ENCODE measurements at regions of chr17 and their contacts with region 1.

Region 1: GRCh38 chr17:76557368-76558197 is 17.7 kb downstream of the PRCD start:
- DNase-seq: peak; percentile 73 to 98
- H3K4me3 ChIP-seq: peak overlapping the region; percentile 50 to 84
- H3K27ac ChIP-seq: peak overlapping the region; percentile 82
- H3K4me1 ChIP-seq: peaks cover 4 to 21% of the 10 kb centered on the region in 2 donors
- H3K27me3 ChIP-seq: no peaks in the 10 kb centered on the region
- CTCF ChIP-seq: peak; percentile 67 to 76 (median 68)

Region 2: GRCh38 chr17:76307299-76307965 is 250.2 kb before region 1 on chr17:
- intact Hi-C with region 1: no loop called
- DNase-seq: no peak
- H3K4me3 ChIP-seq: no peak overlapping the region
- H3K27ac ChIP-seq: no peak overlapping the region
- H3K4me1 ChIP-seq: no peaks in the 10 kb centered on the region
- H3K27me3 ChIP-seq: no peaks in the 10 kb centered on the region
- CTCF ChIP-seq: no peak

Region 3: GRCh38 chr17:76527430-76528111 is 30.0 kb before region 1 on chr17:
- intact Hi-C with region 1: no loop called
- DNase-seq: peak; percentile 66 to 86
- H3K4me3 ChIP-seq: peak overlapping the region in 1 of 2 donors; percentile 39
- H3K27ac ChIP-seq: peak overlapping the region; percentile 93 to 95
- H3K4me1 ChIP-seq: peaks cover 22 to 36% of the 10 kb centered on the region in 2 donors
- H3K27me3 ChIP-seq: no peaks in the 10 kb centered on the region
- CTCF ChIP-seq: peak in 2 of 3 experiments; percentile 27 to 32

Region 4: GRCh38 chr17:76540381-76541300 is 16.9 kb before region 1 on chr17:
- intact Hi-C with region 1: loop called (anchors 2 kb)
- DNase-seq: peak; percentile 86 to 95
- H3K4me3 ChIP-seq: peak overlapping the region; percentile 49 to 59
- H3K27ac ChIP-seq: no peak overlapping the region
- H3K4me1 ChIP-seq: peaks cover 14% of the 10 kb centered on the region in 2 donors
- H3K27me3 ChIP-seq: peaks cover 12% of the 10 kb centered on the region
- CTCF ChIP-seq: peak in 1 of 3 experiments; percentile 10

Region 5: DNA sequence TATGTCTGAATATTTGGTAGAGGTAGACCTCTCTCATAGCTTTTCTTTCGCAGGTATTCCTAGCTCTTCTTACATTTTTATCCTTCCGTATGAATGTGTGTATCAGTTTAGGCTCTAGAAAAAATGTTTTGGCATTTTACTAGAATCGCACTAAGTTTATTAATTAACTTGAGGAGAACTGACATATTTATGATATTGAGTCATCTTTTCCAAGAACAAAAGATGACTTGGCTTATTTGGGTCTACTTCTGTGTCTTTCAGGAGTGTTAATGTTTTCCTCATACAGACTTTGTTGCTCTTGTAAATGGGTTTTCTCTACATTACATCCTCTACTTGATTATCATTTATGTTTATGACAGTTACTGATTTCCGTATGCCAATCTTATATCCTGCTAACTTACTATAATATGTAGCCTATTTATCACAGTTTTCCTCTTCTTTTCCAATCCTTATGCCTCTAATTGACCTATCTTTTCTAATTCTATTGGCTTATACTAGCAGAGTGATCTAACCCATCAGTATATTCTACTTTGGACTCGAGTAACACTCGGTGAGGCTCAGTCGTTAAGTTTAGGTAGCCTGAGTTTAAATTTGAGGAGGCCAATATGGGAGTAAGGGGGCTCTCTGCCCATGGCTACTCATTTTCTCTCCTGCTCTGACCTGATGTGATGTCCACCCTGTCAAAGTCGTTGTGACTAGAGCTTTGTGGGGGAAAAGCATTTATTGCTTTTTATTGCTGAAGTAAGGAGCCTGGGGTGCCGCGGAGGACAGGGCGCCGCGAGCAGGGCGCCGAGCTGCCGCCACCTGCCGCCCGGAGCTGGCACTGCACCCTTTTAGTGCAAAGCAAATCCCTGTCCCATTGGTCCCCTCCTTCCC is 65.9 kb after region 1 on chr17:
- intact Hi-C with region 1: loop called (anchors 2 kb)
- DNase-seq: peak in 1 of 2 donors; percentile 81
- H3K4me3 ChIP-seq: no peak overlapping the region
- H3K27ac ChIP-seq: no peak overlapping the region
- H3K4me1 ChIP-seq: no peaks in the 10 kb centered on the region
- H3K27me3 ChIP-seq: no peaks in the 10 kb centered on the region
- CTCF ChIP-seq: peak; percentile 76 to 97 (median 92)

Region 6: GRCh38 chr17:76671123-76671911 is 113.7 kb after region 1 on chr17:
- intact Hi-C with region 1: loop called (anchors 1 kb)
- DNase-seq: peak; percentile 99 to 100
- H3K4me3 ChIP-seq: peak overlapping the region; percentile 66 to 67
- H3K27ac ChIP-seq: peak overlapping the region; percentile 77 to 79
- H3K4me1 ChIP-seq: peaks cover 0 to 8% of the 10 kb centered on the region in 2 donors
- H3K27me3 ChIP-seq: peaks cover 3% of the 10 kb centered on the region
- CTCF ChIP-seq: no peak

Region 7: DNA sequence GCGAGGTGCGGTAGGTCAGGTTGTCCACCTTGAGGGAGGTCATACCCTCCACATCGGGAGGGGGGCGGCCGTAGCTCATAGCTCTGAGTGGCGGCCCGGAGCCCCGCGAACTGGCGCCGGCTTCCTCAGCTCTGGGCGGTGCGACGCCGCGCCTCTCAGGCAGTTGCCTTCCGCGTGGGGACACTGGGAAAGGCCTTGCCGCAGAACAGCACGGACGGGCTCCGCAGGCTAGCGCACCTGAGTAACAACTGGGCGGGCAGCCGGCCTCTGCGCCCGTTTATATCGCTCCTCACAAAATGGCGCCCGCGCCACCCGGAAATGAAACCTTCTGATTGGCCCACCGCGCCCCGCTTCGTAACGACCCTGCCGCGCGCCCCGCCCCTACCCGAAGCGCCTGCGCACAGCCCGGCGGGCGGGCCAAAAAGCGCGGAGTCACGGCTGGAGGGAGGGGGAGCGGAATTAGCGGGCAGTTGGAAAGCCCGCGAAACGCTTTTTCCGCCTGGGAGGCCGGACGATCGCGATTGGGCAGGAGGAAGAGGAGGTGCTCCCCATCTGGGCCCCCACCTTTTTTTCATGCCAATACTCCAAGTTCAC is 179.6 kb after region 1 on chr17 and contains the start of gene SRSF2:
- intact Hi-C with region 1: loop called (anchors 5 kb)
- DNase-seq: peak; percentile 89 to 99
- H3K4me3 ChIP-seq: peak within 1 kb of the TSS; percentile 92 to 97
- H3K27ac ChIP-seq: peak within 1 kb of the TSS; percentile 95 to 98
- H3K4me1 ChIP-seq: peaks cover 5 to 47% of the 10 kb centered on the region in 2 donors
- H3K27me3 ChIP-seq: no peaks in the 10 kb centered on the region
- CTCF ChIP-seq: no peak
- total RNA-seq, gene SRSF2: 429 TPM

Measured in ascending aorta (tissue), 2 donors.